AG04449 (cell line): ENCODE measurements at regions of chr3 and their contacts with region 1.

Region 1: DNA sequence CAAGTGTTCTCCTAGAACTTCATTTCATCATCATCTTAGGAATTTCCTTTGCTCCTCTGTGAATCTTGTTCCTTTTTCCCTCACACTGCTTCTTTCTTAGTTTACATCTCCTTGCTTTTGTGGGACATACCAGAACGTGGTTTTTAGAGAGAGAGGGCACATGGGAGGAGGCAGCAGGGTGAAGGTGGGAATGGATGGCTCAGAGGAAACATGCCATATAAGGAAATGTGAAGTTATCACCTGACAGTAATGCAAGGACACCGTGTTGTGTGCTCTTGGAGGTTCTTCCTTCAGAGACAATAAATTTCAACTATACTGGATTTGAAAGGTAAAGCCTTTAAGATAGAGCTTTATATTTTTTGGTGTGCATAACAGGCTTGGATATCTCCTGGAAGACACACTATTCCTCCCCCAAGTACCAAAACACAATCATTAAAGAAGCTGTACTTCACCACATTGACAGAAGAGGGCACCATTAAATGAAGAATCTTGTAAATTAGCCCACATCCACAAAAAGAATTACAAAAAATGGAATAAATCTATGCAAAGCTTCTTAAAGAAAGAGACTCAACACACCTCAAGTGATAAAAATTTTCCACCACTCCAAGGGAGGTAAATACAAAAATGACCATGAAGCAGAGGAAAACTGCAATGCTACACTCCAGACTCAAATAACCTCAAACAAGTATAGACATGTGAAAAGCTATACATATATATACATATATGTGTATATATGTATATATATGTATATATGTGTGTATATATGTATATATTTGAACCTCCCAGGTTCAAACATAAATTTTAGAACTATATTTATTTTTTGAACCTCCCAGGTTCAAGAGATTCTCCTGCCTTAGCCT is 26.1 kb downstream of the RPL39L start:
- DNase-seq: no peak
- H3K4me3 ChIP-seq: no peak overlapping the region
- CTCF ChIP-seq: peak; percentile 39

Region 2: DNA sequence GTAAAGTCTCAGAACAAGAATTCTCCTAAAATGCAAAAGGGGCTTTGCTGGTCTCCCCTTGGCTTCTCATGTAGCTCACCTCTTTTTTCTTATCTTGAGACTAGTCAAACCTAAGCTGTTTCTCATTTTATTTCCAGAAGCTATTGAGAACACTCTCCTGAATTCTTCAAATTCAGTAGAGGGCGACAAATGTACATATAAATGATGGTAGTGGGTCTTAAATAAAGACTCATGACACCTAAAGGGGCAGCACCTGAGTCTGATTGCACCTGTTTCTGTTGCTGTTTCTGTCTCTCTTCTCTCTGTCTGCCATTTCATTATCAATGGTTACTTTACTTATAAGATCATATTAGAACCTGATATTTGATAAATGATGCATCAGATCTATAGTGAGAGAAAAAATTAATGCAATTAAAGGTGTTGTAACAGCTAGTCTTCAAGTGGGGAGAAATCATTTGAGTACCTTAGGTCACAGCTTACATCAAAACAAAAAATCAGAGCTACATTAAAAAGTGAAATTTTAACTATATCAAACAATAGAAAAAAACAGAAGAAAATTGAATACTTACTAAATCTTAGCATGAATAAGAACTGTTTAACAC is 263.7 kb before region 1 on chr3:
- CTCF ChIA-PET with region 1: interaction called, 15 read pairs
- POLR2A ChIA-PET with region 1: no interaction called
- DNase-seq: no peak
- H3K4me3 ChIP-seq: no peak overlapping the region
- CTCF ChIP-seq: peak; percentile 1

Region 3: GRCh38 chr3:187101184-187102072 is 11.7 kb before region 1 on chr3:
- CTCF ChIA-PET with region 1: interaction called, 67 read pairs
- POLR2A ChIA-PET with region 1: no interaction called
- DNase-seq: no peak
- H3K4me3 ChIP-seq: peak overlapping the region; percentile 43
- CTCF ChIP-seq: no peak

Region 4: DNA sequence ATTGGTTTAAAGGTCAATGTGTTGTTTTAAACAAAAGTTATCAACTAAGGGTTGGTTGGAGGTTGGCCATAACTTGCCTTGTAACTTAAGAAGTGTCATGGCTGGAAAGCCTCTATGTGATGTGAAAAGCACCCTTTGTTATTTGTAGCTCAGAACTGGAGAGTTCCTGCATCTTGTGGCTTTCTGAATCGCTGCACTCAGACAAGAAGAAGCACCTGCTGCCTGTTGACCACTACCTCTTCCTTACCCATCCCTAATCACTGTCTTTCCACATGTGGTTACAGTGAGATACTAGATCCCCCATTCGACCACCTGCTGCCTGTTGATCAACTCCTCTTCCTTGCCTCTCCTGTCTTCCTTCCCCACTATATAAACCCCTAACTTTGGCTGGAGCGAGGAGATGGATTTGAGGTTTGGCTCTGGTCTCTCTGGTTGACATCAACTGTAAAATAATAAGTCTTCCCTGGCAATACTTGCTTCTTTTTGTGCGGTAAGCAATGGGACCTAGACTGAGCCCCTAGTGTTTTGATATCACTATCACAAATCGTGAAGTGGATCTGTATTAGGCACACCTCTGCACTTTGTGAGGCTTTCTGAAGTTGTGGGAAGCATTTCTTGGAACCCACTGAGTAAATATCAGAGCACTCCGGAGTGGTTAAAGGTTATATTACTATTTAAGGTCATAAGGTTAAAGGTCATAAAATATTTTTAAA is 12.3 kb after region 1 on chr3:
- CTCF ChIA-PET with region 1: interaction called, 39 read pairs
- POLR2A ChIA-PET with region 1: no interaction called
- DNase-seq: no peak
- H3K4me3 ChIP-seq: no peak overlapping the region
- CTCF ChIP-seq: no peak

Region 5: GRCh38 chr3:187130346-187131066 is 17.3 kb after region 1 on chr3:
- CTCF ChIA-PET with region 1: interaction called, 39 read pairs
- POLR2A ChIA-PET with region 1: no interaction called
- DNase-seq: no peak
- H3K4me3 ChIP-seq: no peak overlapping the region
- CTCF ChIP-seq: no peak

Region 6: DNA sequence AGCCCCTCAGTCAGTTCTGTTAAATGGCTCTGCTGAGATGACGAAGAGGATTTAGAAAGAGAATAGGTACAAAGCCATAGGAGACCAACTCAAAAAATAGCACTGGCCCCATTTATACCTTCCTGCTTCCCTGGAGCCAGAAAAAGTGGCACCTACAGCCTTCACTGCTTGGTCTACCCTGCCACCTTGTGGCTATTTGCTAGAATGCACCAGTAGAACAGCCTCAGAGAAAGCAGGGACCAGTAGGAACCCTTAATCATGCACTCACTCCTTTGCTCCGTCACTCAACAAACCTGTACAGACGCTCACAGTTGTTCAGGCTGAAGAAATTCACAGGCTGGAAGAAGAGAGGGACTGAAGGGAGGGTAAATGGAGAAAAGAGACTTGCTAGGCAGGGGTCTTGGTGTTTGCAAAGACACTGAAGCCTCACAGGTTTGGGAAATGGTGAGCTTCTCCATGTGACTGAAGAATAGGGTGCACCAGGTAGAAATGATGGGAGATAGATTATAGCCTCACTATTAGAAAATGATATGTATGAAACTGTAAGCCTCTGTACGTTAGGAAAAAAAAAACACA is 601.3 kb after region 1 on chr3:
- CTCF ChIA-PET with region 1: interaction called, 50 read pairs
- POLR2A ChIA-PET with region 1: no interaction called
- DNase-seq: no peak
- H3K4me3 ChIP-seq: no peak overlapping the region
- CTCF ChIP-seq: peak; percentile 90